GM12878 (cell line): ENCODE measurements at regions of chr1 and their contacts with region 1.

Region 1: GRCh38 chr1:84936116-84936810 is 43.3 kb upstream of the LPAR3 start:
- DNase-seq: no peak
- ATAC-seq: peak; percentile 69
- H3K4me3 ChIP-seq: no peak overlapping the region
- H3K27ac ChIP-seq: no peak overlapping the region
- H3K4me1 ChIP-seq: no peaks in the 10 kb centered on the region
- H3K27me3 ChIP-seq: no peaks in the 10 kb centered on the region
- CTCF ChIP-seq: peak; percentile 83 to 86 (median 85)
- EP300 ChIP-seq: no peak
- POLR2A ChIP-seq: no peak
- RAD21 ChIP-seq: peak; percentile 89

Region 2: DNA sequence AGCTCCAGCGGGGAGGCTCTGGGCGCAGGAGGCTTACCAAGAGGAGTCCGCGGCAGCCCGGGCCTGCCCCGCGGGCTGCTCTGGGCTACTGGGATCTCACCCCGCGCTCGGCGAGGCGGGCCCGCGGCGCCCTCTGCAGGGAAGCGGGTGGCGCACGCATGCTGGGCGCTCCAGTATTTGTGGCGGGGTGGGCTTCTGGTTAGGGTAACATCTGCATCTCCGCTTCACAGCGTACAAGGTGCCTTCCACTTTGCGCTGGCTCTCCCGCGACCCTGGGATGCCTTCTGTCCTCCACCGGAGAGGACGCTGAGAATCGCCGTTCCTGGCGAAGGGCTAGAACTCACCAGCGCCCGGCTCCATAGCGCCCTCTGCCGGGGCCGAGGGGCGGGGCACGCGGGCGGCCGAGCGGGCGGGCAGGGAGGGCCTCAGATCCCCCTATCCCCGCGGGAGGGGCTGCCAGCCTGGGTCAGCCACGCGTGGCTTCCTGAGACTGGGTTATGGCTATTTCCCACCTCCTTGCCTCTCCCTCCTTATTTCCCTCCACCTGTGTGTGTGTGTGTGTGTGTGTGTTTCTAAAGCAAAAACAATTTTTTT is 315.4 kb before region 1 on chr1:
- CTCF ChIA-PET with region 1: interaction called, 3 read pairs
- POLR2A ChIA-PET with region 1: no interaction called
- RAD21 ChIA-PET with region 1: no interaction called
- SMC1A ChIA-PET with region 1: no interaction called
- in situ Hi-C with region 1: no loop called
- intact Hi-C with region 1: loop called (anchors 10 kb)
- DNase-seq: peak; percentile 38
- ATAC-seq: peak; percentile 98
- H3K4me3 ChIP-seq: peak overlapping the region; percentile 78
- H3K27ac ChIP-seq: peak overlapping the region; percentile 47
- H3K4me1 ChIP-seq: no peaks in the 10 kb centered on the region
- H3K27me3 ChIP-seq: no peaks in the 10 kb centered on the region; a peak in 1 of 4 replicates
- CTCF ChIP-seq: peak; percentile 64 to 79 (median 73)
- EP300 ChIP-seq: no peak
- POLR2A ChIP-seq: peak; percentile 44
- RAD21 ChIP-seq: peak; percentile 85

Region 3: DNA sequence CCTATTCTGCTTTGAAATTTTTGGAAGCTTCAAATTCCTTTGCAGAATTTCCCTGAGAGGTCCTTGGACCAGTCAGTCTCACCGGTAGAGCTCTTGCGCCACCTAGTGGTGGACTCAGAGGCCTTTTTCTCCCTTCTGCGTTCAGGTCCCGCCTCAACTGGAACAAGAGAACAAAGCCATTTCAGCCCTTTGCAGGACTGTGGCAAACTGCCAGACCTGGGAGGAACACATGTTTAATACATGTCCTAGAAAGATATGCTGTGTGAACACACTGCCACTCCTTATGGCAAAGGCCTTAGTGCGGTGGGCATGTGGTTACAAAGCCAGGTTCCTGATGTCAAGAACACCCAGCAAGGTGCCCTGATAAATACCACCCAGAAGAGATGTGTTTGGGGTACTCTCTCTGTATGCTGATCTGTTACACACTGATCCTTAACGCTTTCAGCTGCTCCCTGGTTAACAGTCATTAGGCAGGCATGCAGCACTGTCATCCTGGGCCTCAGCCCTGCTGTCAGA is 163.8 kb before region 1 on chr1:
- CTCF ChIA-PET with region 1: interaction called, 15 read pairs
- POLR2A ChIA-PET with region 1: no interaction called
- RAD21 ChIA-PET with region 1: interaction called, 10 read pairs
- SMC1A ChIA-PET with region 1: interaction called, 9 read pairs
- in situ Hi-C with region 1: no loop called
- intact Hi-C with region 1: no loop called
- DNase-seq: no peak
- ATAC-seq: peak; percentile 96
- H3K4me3 ChIP-seq: no peak overlapping the region
- H3K27ac ChIP-seq: no peak overlapping the region
- H3K4me1 ChIP-seq: no peaks in the 10 kb centered on the region
- H3K27me3 ChIP-seq: no peaks in the 10 kb centered on the region
- CTCF ChIP-seq: peak; percentile 78 to 89 (median 87)
- EP300 ChIP-seq: no peak
- POLR2A ChIP-seq: no peak
- RAD21 ChIP-seq: peak; percentile 93

Region 4: DNA sequence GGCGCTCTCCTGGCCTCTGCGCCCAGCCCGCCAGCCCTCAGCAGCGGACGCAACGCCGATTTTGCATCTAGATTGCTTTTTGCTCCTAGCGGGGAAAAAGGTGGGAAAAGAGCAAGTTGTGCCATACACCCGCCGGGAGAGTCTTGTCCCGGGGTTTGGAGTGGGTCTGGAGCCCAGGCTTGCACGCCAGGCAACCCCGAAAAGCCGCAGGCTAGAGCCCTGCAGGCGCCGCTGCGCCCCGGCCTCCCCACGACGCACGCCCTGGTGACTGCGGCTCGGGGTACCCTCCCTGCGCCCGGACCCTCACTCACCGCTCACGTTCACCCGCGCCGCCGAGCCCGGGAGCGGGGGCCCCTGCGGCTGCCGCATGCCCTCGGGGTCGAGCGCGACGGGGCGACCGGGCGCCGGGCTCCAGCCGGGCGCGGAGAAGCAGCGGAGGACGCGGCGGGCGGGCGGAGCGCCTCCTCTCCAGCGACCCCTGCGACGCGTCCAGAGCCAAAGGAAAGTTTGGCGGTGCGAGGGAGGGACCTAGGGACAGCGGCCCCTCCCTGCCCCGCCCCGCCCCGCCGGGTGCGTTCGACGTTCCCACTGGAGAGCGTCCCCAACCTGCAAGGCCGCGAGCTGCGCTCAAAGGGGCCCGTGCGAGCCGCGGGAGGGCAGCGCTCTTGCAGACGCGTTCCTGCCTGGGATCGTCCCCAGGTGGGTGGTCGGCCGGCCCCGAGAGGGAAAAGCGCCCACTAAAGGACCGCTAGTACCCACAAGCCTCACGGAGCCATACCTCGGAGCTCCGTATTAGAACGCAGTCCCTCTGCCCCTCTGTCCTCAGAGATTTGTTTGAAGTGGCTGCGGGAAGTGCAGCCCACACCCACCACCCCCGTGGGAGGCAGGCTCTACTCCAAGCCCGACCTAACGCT is 43.3 kb before region 1 on chr1 and contains the start of gene LPAR3:
- CTCF ChIA-PET with region 1: no interaction called
- POLR2A ChIA-PET with region 1: no interaction called
- RAD21 ChIA-PET with region 1: no interaction called
- SMC1A ChIA-PET with region 1: no interaction called
- in situ Hi-C with region 1: no loop called
- intact Hi-C with region 1: no loop called
- DNase-seq: no peak
- ATAC-seq: peak; percentile 18; the same call in 1 of the 3 replicates
- H3K4me3 ChIP-seq: no peak within 1 kb of the TSS
- H3K27ac ChIP-seq: no peak within 1 kb of the TSS
- H3K4me1 ChIP-seq: no peaks in the 10 kb centered on the region
- H3K27me3 ChIP-seq: peaks cover 7 to 18% of the 10 kb centered on the region in 2 experiments
- CTCF ChIP-seq: no peak
- EP300 ChIP-seq: no peak
- POLR2A ChIP-seq: no peak
- RAD21 ChIP-seq: no peak
- polyA plus RNA-seq, gene LPAR3: 0.03 TPM in 1 of 2 experiments, not detected in the other

Region 5: DNA sequence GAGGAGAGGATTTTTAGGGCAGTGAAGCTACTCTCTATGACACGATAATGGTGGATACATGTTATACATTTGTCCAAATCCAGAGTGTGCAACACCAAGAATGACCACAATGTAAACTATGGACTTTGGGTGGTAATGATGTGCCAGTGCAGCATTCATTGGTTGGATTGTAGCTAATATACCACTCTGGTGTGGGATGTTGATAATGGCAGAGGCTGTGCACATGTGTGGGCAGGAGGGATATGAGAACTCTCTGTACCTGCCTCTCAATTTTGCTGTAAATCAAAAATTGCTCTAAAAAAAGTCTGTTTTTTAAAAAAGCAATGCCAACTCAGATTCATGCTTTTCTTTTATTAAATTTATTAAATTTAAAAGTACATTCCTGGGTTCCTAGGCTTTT is 16.1 kb before region 1 on chr1:
- CTCF ChIA-PET with region 1: interaction called, 30 read pairs
- POLR2A ChIA-PET with region 1: no interaction called
- RAD21 ChIA-PET with region 1: no interaction called
- SMC1A ChIA-PET with region 1: interaction called, 9 read pairs
- in situ Hi-C with region 1: no loop called
- intact Hi-C with region 1: no loop called
- DNase-seq: no peak
- ATAC-seq: no peak
- H3K4me3 ChIP-seq: no peak overlapping the region
- H3K27ac ChIP-seq: no peak overlapping the region
- H3K4me1 ChIP-seq: no peaks in the 10 kb centered on the region
- H3K27me3 ChIP-seq: no peaks in the 10 kb centered on the region; a peak in 1 of 4 replicates
- CTCF ChIP-seq: no peak
- EP300 ChIP-seq: no peak
- POLR2A ChIP-seq: no peak
- RAD21 ChIP-seq: no peak

Region 6: GRCh38 chr1:85033221-85033620 is 97.0 kb after region 1 on chr1:
- CTCF ChIA-PET with region 1: interaction called, 319 read pairs
- POLR2A ChIA-PET with region 1: no interaction called
- RAD21 ChIA-PET with region 1: interaction called, 209 read pairs
- SMC1A ChIA-PET with region 1: interaction called, 214 read pairs
- in situ Hi-C with region 1: no loop called
- intact Hi-C with region 1: no loop called
- DNase-seq: no peak
- ATAC-seq: no peak
- H3K4me3 ChIP-seq: no peak overlapping the region
- H3K27ac ChIP-seq: no peak overlapping the region
- H3K4me1 ChIP-seq: no peaks in the 10 kb centered on the region
- H3K27me3 ChIP-seq: no peaks in the 10 kb centered on the region
- CTCF ChIP-seq: no peak
- EP300 ChIP-seq: no peak
- POLR2A ChIP-seq: no peak
- RAD21 ChIP-seq: no peak

Region 7: GRCh38 chr1:85681087-85681486 is 744.8 kb after region 1 on chr1:
- CTCF ChIA-PET with region 1: no interaction called
- POLR2A ChIA-PET with region 1: no interaction called
- RAD21 ChIA-PET with region 1: no interaction called
- SMC1A ChIA-PET with region 1: no interaction called
- in situ Hi-C with region 1: no loop called
- intact Hi-C with region 1: no loop called
- DNase-seq: no peak
- ATAC-seq: no peak
- H3K4me3 ChIP-seq: no peak overlapping the region
- H3K27ac ChIP-seq: no peak overlapping the region
- H3K4me1 ChIP-seq: no peaks in the 10 kb centered on the region
- H3K27me3 ChIP-seq: no peaks in the 10 kb centered on the region
- CTCF ChIP-seq: no peak
- EP300 ChIP-seq: no peak
- POLR2A ChIP-seq: no peak
- RAD21 ChIP-seq: no peak